HEK293 (cell line): ENCODE measurements at regions of chr17 and their contacts with region 1.

Region 1: GRCh38 chr17:51585514-51586104 is 325.3 kb downstream of the UTP18 start:
- H3K4me3 ChIP-seq: no peak overlapping the region
- H3K27ac ChIP-seq: no peak overlapping the region
- H3K4me1 ChIP-seq: no peaks in the 10 kb centered on the region
- CTCF ChIP-seq: peak; percentile 64

Region 2: GRCh38 chr17:51427856-51428255 is 157.8 kb before region 1 on chr17:
- CTCF ChIA-PET with region 1: no interaction called
- POLR2A ChIA-PET with region 1: no interaction called
- H3K4me3 ChIP-seq: no peak overlapping the region
- H3K27ac ChIP-seq: no peak overlapping the region
- H3K4me1 ChIP-seq: no peaks in the 10 kb centered on the region
- CTCF ChIP-seq: no peak

Region 3: DNA sequence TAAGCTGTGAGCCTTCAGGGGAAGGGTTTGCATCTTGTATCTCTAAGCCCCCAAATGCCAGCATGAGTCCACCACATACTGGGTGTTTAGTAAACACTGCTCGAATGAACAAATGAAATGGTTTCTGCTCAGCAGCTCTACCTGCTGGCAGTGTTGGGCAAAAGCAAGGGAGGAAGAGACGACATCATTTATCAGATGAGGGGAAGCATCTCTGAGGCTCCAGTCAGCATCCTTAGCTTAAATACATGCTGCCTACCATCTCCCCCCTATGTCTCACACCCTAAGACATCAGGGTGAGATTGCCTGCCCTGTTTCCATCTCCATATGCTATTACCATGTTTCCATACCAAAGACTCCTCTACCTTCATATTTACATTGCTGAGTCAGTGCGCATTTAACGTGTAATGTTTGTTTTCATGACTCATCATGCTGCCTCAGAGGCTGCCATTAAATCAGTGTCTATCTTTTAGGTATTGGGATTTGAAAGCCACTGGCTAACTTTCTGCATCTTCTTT is 54.6 kb after region 1 on chr17:
- CTCF ChIA-PET with region 1: interaction called, 10 read pairs
- POLR2A ChIA-PET with region 1: no interaction called
- H3K4me3 ChIP-seq: no peak overlapping the region
- H3K27ac ChIP-seq: no peak overlapping the region
- H3K4me1 ChIP-seq: peaks cover 17% of the 10 kb centered on the region
- CTCF ChIP-seq: peak; percentile 53; the same call in 1 of the 2 replicates

Region 4: GRCh38 chr17:51709694-51710633 is 124.4 kb after region 1 on chr17:
- CTCF ChIA-PET with region 1: interaction called, 15 read pairs
- POLR2A ChIA-PET with region 1: no interaction called
- H3K4me3 ChIP-seq: no peak overlapping the region
- H3K27ac ChIP-seq: no peak overlapping the region
- H3K4me1 ChIP-seq: peaks cover 23% of the 10 kb centered on the region
- CTCF ChIP-seq: no peak

Region 5: DNA sequence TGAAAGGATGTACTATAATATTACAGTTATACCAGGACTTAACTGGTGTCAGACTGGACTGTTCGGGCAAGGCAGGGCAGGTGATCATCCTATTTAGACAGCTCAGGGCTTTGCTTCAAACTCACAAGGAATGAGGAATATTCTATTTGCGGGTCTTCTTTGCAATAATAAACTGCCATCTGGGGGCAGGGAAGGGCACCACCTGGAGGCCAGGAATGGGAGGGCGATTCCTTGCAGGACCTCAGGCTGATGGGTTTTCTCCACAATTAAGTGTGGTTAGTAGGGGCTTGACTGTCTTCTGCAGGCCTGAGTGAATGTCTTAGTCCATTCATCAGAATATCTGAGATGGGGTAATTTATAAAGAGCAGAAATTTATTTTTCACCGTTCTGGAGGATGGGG is 148.9 kb after region 1 on chr17:
- CTCF ChIA-PET with region 1: interaction called, 21 read pairs
- POLR2A ChIA-PET with region 1: no interaction called
- H3K4me3 ChIP-seq: no peak overlapping the region
- H3K27ac ChIP-seq: no peak overlapping the region
- H3K4me1 ChIP-seq: peaks cover 11% of the 10 kb centered on the region
- CTCF ChIP-seq: 0 out of 2 replicates have a peak, but pooled peaks have one; percentile 38

Region 6: DNA sequence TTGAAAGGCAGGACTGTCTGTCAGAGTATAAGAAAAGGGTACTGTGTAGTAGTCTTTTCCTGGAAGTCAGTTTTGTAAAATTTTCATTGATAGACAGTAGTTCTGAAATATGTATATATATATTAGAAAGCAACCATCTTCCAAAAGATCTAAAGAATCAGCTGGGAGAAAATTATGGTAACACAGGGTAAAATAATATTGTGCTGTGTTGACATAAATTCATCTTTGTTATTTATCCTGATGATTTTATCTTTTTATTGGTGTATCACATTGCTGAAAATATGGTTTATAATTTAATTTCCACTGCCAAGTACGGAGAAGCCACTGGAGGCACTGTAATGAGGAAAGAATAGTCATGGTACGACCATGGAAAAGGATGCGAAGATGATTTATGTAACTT is 248.0 kb after region 1 on chr17:
- CTCF ChIA-PET with region 1: no interaction called
- POLR2A ChIA-PET with region 1: no interaction called
- H3K4me3 ChIP-seq: no peak overlapping the region
- H3K27ac ChIP-seq: no peak overlapping the region
- H3K4me1 ChIP-seq: no peaks in the 10 kb centered on the region
- CTCF ChIP-seq: no peak

Region 7: DNA sequence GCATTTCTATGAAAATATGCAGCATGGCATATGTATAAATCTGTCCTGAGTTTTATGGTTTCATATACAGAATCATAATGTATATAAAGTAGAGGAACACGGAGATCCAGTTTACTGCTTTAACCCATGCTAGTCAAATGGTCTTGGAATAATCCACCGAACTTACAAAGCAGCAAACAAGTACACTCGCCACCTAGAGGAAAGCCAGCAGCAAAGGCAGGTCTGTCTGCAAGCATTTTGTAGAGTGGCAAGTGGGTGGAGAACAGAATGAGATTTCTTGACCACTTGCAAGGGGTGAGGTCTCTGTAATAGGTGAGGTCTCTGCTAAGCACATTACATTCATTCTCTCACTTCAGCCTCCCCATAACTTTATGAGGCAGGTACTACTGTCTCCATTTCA is 264.6 kb after region 1 on chr17:
- CTCF ChIA-PET with region 1: no interaction called
- POLR2A ChIA-PET with region 1: interaction called, 10 read pairs
- H3K4me3 ChIP-seq: no peak overlapping the region
- H3K27ac ChIP-seq: no peak overlapping the region
- H3K4me1 ChIP-seq: no peaks in the 10 kb centered on the region
- CTCF ChIP-seq: no peak

Region 8: DNA sequence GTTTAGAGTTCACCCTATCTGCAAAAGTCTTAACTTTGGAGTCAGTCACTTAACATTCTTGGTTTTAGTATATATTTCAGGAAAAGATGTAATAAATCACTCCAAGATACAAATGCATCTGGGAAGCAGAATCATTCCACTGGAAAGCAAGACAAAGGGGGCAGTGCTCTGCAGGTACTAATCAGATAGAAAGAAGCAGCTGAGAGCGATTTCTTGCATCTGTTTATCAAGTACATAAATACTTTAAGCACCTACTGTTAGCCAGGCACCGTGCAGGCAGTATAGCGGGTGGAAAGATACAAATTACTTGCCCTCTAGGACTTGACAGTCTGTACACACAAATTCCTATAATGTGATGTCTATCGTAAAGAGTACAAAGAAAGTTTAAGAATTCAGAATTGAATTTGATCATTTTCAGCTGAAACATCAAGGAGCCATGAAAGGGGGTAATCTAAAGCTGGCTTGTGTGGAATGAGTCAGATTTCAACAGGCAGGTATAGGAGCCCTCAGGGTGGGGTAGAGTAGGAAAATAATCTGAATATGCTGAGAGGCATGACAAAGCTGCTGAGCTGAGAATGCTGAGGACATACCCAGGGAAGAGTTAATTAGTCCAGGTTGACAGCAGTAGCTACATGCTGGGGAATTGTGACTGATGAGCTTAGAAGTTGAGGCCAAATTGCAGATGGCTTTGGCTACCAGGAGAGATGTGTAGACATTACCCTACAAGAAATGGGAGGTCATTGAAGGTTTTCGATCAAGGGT is 462.7 kb after region 1 on chr17:
- CTCF ChIA-PET with region 1: no interaction called
- POLR2A ChIA-PET with region 1: no interaction called
- H3K4me3 ChIP-seq: no peak overlapping the region
- H3K27ac ChIP-seq: no peak overlapping the region
- H3K4me1 ChIP-seq: no peaks in the 10 kb centered on the region
- CTCF ChIP-seq: no peak